A673 (cell line): ENCODE measurements at regions of chr13 and their contacts with region 1.

Region 1: DNA sequence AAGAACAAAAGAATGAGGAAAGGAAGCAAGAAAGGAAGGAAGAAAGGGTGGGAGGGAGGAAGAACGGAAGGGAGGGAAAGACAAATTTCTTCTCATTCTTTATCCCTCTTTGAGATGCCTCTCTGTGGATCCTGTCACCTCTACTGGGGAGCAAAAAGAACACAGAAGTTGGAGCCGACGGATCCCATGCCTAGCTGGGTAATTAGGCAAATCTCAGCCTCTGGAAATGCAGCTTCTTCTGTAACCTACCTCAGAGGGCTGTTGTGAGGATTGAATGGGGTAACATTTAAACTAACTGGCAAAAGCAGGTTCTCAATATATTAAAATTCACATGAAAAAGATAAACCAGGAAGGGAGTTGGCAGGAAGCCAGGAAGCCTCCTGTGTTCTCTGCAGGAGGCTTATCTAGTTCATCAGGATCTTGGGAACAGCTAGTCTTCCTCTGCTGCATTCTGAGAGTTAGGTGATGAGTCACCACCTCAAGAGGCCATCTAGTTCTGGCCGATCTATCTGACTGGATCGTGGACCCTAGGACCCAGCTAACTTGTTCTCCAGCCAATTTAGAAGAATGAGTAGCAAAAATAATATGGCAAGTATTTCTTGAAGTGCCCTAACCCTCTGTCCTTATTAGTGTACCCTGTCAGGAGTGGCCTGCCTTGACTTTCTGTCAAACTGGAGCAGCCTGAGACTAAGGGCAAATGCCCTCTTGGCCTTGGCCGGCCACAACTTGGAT is 15.2 kb upstream of the CPB2 start:
- DNase-seq: peak; percentile 92
- H3K4me3 ChIP-seq: no peak overlapping the region
- H3K27ac ChIP-seq: peak overlapping the region; percentile 99
- H3K4me1 ChIP-seq: peaks cover 92% of the 10 kb centered on the region
- H3K27me3 ChIP-seq: no peaks in the 10 kb centered on the region
- CTCF ChIP-seq: no peak

Region 2: GRCh38 chr13:45325806-45326205 is 794.2 kb before region 1 on chr13:
- CTCF ChIA-PET with region 1: no interaction called
- POLR2A ChIA-PET with region 1: no interaction called
- intact Hi-C with region 1: loop called (anchors 2 kb)
- DNase-seq: no peak
- H3K4me3 ChIP-seq: no peak overlapping the region
- H3K27ac ChIP-seq: peak overlapping the region; percentile 53
- H3K4me1 ChIP-seq: peaks cover 41% of the 10 kb centered on the region
- H3K27me3 ChIP-seq: no peaks in the 10 kb centered on the region
- CTCF ChIP-seq: no peak

Region 3: DNA sequence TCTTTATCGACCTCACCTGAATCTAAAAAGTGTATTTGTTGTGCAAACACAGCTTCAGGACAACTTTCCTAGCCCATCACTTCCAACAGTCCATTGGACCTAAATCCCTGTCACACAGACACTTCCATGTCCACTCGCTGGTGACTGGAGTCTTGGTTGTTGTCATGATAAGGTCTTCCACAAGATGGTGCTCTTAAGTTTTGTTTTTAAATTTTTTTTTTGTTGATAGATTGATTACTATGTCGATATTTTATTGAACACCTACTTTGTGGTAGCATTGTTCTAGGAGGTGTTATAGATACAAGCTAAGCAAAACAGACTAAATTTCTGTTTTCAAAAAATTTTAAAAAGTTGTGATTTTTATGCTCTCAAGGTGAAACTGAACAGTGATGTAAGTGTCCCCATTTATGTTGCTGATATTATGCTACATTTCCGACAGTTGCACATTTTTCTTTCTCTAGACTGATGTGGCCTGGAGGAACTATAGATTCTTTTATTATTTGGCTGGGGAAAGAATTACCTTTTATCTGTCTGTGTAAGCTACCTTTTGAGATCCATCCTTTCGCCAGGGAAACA is 496.4 kb before region 1 on chr13:
- CTCF ChIA-PET with region 1: interaction called, 3 read pairs
- POLR2A ChIA-PET with region 1: no interaction called
- intact Hi-C with region 1: loop called (anchors 5 kb)
- DNase-seq: peak; percentile 57
- H3K4me3 ChIP-seq: no peak overlapping the region
- H3K27ac ChIP-seq: no peak overlapping the region
- H3K4me1 ChIP-seq: peaks cover 16% of the 10 kb centered on the region
- H3K27me3 ChIP-seq: no peaks in the 10 kb centered on the region
- CTCF ChIP-seq: peak; percentile 77

Region 4: GRCh38 chr13:45678282-45678681 is 441.8 kb before region 1 on chr13:
- CTCF ChIA-PET with region 1: no interaction called
- POLR2A ChIA-PET with region 1: no interaction called
- intact Hi-C with region 1: loop called (anchors 1 kb)
- DNase-seq: peak; percentile 73
- H3K4me3 ChIP-seq: no peak overlapping the region
- H3K27ac ChIP-seq: peak overlapping the region; percentile 72
- H3K4me1 ChIP-seq: peaks cover 27% of the 10 kb centered on the region
- H3K27me3 ChIP-seq: no peaks in the 10 kb centered on the region
- CTCF ChIP-seq: no peak

Region 5: DNA sequence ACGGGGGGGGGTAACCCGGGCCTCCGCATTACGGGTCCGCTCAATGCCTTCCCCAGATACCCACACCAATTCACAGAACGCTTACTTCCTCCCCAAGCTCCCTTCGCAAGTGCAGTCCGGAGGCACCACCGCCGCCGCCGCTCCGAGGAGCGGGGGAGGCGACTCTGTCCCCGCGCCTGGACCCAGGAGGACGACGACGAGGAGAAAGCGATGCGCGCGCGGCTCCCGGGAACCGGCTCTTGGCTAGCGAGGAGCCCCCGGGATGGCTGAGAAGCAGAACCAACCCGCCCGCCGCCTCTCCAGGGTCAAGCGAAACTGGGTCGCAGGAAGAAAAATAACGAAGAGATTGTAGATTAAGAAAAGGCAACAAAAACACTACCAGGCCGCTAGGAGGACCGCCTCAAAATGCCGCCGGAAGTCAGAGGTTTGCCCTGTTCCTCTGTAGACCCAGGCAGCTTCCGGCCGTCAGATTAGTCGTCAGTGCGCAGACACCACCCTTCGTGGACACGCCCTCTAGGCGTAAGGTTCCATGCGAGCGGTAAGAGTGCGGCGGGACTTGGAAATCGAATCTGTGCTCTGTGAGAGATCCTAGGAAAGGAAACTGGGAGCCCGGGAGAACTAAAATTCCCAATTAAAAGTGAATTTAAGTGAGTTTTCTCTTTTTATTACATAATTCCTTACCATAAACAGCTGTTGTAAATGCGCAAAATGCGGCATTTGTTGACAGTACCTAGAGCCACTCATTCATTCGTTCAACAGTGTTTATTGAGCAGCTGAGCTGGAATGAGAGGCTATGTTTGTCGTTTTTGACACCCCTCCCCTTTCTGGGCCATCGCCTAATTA is 67.5 kb before region 1 on chr13 and contains the start of gene ZC3H13:
- CTCF ChIA-PET with region 1: no interaction called
- POLR2A ChIA-PET with region 1: interaction called, 7 read pairs
- intact Hi-C with region 1: loop called (anchors 2 kb)
- DNase-seq: peak; percentile 99
- H3K4me3 ChIP-seq: peak within 1 kb of the TSS; percentile 89
- H3K27ac ChIP-seq: peak within 1 kb of the TSS; percentile 98
- H3K4me1 ChIP-seq: peaks cover 22% of the 10 kb centered on the region
- H3K27me3 ChIP-seq: no peaks in the 10 kb centered on the region
- CTCF ChIP-seq: peak; percentile 42; the same call in 1 of the 2 replicates
- total RNA-seq, gene ZC3H13: 373 and 378 TPM in 2 replicates

Region 6: DNA sequence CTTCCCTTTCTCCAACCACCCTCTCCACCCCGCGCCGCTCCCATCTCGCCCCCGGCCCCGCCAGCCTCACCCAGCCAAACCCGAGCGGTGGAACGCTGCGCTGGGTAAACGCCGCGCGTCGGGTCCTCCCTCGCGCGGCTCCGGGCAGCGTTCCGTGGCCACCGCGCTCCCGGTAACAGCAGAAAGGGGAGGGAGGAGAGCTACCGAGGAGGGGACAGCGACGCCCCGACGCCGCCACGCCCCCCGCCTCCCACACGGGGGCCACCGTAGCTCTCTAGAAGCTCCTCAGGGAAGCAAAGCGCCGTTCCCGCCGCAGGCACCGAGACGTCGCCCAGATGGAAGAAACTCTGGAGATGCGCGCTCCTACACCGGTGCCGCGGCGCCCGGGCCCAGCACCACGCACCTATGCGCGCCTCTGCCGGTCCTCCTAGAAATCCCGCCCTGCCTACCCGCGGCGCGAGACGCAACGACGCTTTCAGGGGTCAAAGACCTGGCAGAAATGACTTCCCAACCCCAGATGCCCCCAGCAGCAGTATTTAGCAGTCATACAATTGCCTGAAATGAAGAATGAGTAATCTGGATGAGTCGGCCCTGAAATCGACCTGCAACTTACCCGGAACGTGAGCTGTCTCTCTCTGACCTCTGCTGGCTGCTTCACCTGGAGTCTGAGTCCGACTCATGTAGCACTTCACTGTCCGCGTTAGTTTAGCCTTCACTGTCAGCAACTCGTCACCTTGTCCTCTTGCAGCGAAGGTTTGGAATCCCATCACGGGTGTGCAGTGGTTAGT is 267.2 kb after region 1 on chr13 and contains the start of gene RUBCNL:
- CTCF ChIA-PET with region 1: no interaction called
- POLR2A ChIA-PET with region 1: no interaction called
- intact Hi-C with region 1: loop called (anchors 2 kb)
- DNase-seq: peak; percentile 88
- H3K4me3 ChIP-seq: peak within 1 kb of the TSS; percentile 90
- H3K27ac ChIP-seq: peak within 1 kb of the TSS; percentile 96
- H3K4me1 ChIP-seq: peaks cover 48% of the 10 kb centered on the region
- H3K27me3 ChIP-seq: no peaks in the 10 kb centered on the region
- CTCF ChIP-seq: no peak
- total RNA-seq, gene RUBCNL: 110 and 126 TPM in 2 replicates

Region 7: GRCh38 chr13:47277774-47278173 is 1157.7 kb after region 1 on chr13:
- CTCF ChIA-PET with region 1: no interaction called
- POLR2A ChIA-PET with region 1: no interaction called
- intact Hi-C with region 1: no loop called
- DNase-seq: no peak
- H3K4me3 ChIP-seq: no peak overlapping the region
- H3K27ac ChIP-seq: no peak overlapping the region
- H3K4me1 ChIP-seq: no peaks in the 10 kb centered on the region
- H3K27me3 ChIP-seq: peaks cover 9% of the 10 kb centered on the region
- CTCF ChIP-seq: no peak